ENCODE measurements at regions of chr16 and their contacts with region 1.

Region 1: GRCh38 chr16:30650369-30651123 is at the start of gene PRR14:
- DNase-seq: peak; percentile 100
- H3K4me3 ChIP-seq: peak within 1 kb of the TSS; percentile 59 to 75
- H3K27ac ChIP-seq: peak within 1 kb of the TSS; percentile 91 to 95
- H3K4me1 ChIP-seq: peaks cover 12% of the 10 kb centered on the region
- H3K27me3 ChIP-seq: no peaks in the 10 kb centered on the region
- CTCF ChIP-seq: peak in 3 of 4 experiments; percentile 41 to 87 (median 78)
- POLR2A ChIP-seq: peak; percentile 22
- total RNA-seq, gene PRR14: 37.5 to 66.7 TPM

Region 2: DNA sequence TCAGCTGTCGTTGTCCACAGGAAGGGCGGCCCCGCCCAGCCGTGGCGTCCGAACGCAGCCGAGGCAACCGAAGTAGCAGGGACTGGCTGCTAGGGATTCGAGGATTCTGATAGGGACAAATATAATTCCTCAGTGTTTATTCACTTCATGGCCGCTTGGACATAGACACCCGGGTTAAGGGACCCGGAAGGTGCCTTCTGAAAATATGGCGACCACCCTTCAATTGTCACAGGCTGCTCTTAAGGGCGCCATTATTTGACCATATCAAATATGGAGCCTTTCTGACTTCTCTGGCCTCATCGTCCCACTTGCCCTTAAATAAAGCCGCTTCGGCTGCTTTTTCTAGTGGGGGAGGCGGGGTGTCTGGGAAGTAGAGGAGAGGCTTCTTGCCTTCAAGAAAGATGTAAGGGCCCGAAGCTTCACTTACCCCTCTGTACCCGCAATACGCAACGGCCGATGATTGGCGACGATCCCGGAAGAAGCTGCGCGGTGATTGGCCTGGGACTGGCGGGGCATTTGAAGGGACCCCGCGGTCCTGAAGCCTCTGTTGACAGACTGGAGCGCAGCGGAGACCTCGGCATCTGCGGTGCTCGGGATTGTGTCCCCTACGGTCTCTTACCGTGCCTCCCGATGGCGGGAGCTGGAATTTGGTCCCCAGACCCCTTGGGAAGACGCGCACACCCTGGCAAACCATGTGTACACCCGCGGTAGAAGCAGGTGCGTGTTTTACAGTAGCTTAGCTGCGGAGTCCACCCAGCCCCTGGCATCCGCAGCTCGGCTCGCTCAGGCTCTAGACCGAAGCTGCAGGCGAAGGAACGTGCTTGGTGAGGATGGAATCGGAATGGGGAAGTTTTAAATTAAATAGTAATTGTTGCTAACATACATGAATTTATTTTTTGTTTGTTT is 78.6 kb before region 1 on chr16 and contains the start of gene ZNF688:
- intact Hi-C with region 1: loop called (anchors 5 kb)
- DNase-seq: peak; percentile 97
- H3K4me3 ChIP-seq: peak within 1 kb of the TSS; percentile 65 to 77
- H3K27ac ChIP-seq: peak within 1 kb of the TSS; percentile 97 to 98
- H3K4me1 ChIP-seq: peaks cover 6% of the 10 kb centered on the region
- H3K27me3 ChIP-seq: no peaks in the 10 kb centered on the region
- CTCF ChIP-seq: peak in 2 of 4 experiments; percentile 9 to 18
- POLR2A ChIP-seq: peak; percentile 57
- total RNA-seq, gene ZNF688: 20.4 to 21.5 TPM

Measured in prostate gland (tissue), 2 donors.